ENCODE measurements at regions of chr12 and their contacts with region 1.

Region 1: GRCh38 chr12:94427501-94428381 is 31.9 kb downstream of the CEP83 start:
- DNase-seq: peak; percentile 16
- H3K4me3 Mint-ChIP-seq: no peak overlapping the region
- H3K27ac Mint-ChIP-seq: peak overlapping the region; percentile 54
- H3K4me1 Mint-ChIP-seq: peaks cover 29% of the 10 kb centered on the region
- H3K27me3 Mint-ChIP-seq: no peaks in the 10 kb centered on the region

Region 2: DNA sequence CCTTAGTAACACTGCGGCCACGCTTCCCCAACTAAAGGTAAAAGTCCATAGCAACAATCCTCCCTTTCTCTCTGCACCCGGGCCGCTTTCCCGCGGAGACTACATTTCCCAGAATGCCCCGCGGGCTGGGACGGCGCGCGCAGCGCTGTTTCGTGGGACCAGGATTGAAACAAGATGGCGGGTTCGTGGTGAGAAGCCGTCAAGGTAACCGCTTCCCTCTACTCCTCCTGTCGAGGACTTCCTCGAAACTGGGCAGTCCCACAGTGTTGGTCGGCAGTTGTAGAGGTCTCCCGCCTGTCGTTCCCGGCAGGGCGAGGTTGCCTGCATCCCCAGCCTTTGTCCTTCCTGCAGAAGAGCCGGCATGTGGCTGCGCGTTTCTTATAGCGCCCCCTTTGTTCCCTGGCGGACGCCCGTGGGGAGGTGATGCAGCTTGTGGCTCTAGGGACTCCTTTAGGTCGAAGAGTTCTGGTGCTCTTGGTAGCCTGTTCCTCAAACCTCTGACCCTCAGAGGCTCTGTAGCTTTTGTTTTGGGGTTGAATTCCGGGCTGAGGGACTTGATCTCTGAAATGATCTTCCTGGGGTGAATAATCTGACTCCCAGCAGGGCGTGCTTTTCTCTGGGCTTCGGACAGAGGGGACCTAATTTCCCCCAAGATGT is 960.3 kb before region 1 on chr12 and contains the start of gene MRPL42:
- CTCF ChIA-PET with region 1: no interaction called
- POLR2A ChIA-PET with region 1: no interaction called
- intact Hi-C with region 1: no loop called
- DNase-seq: peak; percentile 95
- H3K4me3 Mint-ChIP-seq: peak within 1 kb of the TSS; percentile 93
- H3K27ac Mint-ChIP-seq: peak within 1 kb of the TSS; percentile 88
- H3K4me1 Mint-ChIP-seq: peaks cover 29% of the 10 kb centered on the region
- H3K27me3 Mint-ChIP-seq: no peaks in the 10 kb centered on the region
- total RNA-seq, gene MRPL42: 65.0 to 67.6 TPM

Region 3: GRCh38 chr12:94326727-94327126 is 101.0 kb before region 1 on chr12:
- CTCF ChIA-PET with region 1: no interaction called
- POLR2A ChIA-PET with region 1: no interaction called
- intact Hi-C with region 1: loop called (anchors 5 kb)
- DNase-seq: peak; percentile 20
- H3K4me3 Mint-ChIP-seq: no peak overlapping the region
- H3K27ac Mint-ChIP-seq: peak overlapping the region; percentile 8
- H3K4me1 Mint-ChIP-seq: peaks cover 24% of the 10 kb centered on the region
- H3K27me3 Mint-ChIP-seq: no peaks in the 10 kb centered on the region

Region 4: DNA sequence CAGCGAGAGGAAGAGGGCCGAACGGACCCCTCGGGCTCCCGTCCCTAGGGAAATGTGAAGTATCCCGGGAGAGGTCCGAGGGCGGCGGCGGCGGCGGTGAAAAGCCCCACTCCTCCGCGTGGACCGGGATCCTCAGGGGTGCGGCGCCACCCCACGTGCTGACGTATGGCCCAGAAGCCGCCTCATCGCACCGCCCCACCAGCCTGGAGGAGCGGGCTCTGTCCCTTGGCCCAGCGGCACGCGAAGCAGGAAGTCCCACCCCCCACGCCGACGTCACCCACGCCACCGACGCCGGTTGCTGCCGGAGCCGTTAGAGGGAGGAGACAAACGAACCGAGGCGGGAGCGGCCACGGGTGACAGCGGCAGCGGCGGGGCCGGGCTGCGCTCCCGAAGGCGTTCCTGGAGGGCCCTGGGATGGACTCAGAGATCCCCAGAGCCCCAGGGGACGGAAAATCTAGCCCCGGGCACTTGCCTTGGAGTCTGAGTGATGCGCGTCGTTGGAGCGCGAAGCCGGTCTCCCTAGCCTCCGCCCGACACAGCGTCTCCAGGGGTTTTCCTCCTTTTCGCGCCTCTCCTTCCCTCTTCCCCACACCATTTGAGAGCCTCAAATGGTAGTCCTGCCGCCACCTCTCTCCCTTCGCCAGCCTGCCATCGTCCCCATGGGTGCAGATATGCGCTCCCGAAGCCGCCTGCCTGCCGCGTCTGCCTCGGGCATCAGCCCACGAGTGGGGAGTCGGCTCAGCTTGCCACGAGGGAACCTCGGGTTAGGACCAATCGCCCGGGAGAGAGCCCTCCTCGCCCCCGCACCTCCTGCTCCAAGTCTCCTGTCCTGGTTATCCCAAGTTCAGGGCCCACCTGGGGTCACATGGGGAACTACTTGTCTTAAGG is 32.2 kb after region 1 on chr12 and contains the start of gene CEP83:
- CTCF ChIA-PET with region 1: interaction called, 3 read pairs
- POLR2A ChIA-PET with region 1: no interaction called
- intact Hi-C with region 1: loop called (anchors 2 kb)
- DNase-seq: peak; percentile 98
- H3K4me3 Mint-ChIP-seq: peak within 1 kb of the TSS; percentile 82
- H3K27ac Mint-ChIP-seq: peak within 1 kb of the TSS; percentile 92
- H3K4me1 Mint-ChIP-seq: peaks cover 31% of the 10 kb centered on the region
- H3K27me3 Mint-ChIP-seq: peaks cover 7% of the 10 kb centered on the region
- total RNA-seq, gene CEP83: 23.4 TPM